ENCODE measurements at regions of chr5 and their contacts with region 1.

Region 1: DNA sequence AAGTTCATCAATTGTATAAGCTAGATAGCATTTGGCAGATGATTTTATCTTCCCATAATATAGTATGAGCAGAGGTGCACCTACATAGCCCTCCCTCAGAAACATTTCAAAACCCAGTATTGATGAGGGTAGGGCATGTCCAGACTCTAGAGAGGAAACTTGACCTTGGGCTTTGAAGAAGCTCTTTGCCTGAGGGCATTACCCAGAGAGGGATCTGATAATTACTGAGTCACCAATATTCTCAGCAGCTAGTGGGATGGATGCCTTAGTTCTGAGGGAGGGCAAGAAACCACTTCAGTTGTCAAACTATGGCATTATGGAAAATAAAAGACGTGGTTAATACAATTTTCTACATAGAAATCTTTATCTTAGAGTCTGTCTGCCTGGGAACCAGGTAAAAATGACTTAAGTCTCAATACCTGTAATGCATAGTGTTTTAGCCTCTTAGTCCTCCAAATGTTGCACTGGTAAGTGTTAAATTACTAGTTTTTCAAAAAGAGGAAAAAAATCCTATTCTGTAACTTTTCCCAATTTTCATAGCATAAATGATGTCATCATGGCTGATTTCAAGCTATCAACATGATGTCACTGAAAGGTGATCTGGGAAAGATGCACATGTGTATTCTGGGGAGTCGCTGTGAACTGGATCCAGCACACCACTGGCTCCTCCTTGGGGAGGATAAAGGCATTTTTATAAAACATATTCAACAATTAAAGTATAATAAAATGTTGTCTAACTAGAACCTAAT is 809.0 kb downstream of the KCTD16 start:
- DNase-seq: no peak
- ATAC-seq: no peak
- H3K4me3 ChIP-seq: no peak overlapping the region
- H3K27ac ChIP-seq: no peak overlapping the region
- H3K4me1 ChIP-seq: no peaks in the 10 kb centered on the region
- H3K27me3 ChIP-seq: peaks cover 3% of the 10 kb centered on the region; the same call in 1 of the 2 replicates
- CTCF ChIP-seq: no peak
- POLR2A ChIP-seq: no peak
- RAD21 ChIP-seq: 0 out of 2 replicates have a peak, but pooled peaks have one; percentile 5

Region 2: GRCh38 chr5:144918371-144918770 is 61.3 kb before region 1 on chr5:
- CTCF ChIA-PET with region 1: no interaction called
- POLR2A ChIA-PET with region 1: no interaction called
- RAD21 ChIA-PET with region 1: no interaction called
- intact Hi-C with region 1: loop called (anchors 2 kb)
- DNase-seq: no peak
- ATAC-seq: no peak
- H3K4me3 ChIP-seq: no peak overlapping the region
- H3K27ac ChIP-seq: no peak overlapping the region
- H3K4me1 ChIP-seq: no peaks in the 10 kb centered on the region
- H3K27me3 ChIP-seq: peaks cover 8% of the 10 kb centered on the region
- CTCF ChIP-seq: no peak
- POLR2A ChIP-seq: no peak
- RAD21 ChIP-seq: no peak